MCF 10A (cell line): ENCODE measurements at regions of chr11 and their contacts with region 1.

Region 1: DNA sequence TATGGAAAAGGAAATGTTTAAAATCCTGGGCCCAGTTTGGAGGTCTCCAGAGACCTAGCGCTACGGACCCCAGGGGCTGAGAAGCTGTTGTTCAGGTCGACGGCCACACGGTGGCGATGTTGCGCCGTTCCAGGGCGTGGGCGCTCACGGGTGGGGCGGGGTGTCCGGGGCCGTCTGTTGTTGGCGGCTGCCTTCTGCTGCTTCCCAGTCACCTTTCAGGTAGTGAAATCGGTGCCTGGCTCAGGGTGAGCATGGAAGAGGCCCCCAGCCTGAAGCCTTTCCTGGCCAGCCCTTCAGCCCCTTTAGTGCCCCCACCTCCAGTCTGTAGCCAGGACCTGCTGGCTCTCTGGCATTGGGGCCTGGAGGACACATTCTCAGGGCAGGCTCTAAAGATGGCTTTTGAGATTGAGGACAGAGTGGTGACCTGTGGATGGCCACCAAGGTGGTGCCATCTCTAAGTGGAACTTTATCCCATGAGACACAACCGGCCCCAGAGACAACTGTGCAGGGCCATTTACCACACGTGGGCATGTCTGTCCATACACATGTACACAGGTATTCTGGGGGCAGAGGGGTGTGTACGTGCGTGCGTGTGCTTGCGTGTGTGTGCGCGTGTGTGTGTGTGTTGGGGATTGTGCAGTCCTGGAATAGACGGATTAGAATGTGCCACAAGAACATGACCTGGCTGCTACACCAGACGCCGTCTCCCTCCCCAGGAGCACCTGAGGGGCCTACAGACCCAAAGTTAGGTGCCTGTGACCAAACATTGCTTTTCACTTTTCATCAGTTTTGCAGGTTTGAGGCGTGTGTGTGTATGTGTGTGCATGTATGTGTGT is 53.8 kb downstream of the ST14 start:
- DNase-seq: peak; percentile 55
- H3K4me3 Mint-ChIP-seq: no peak overlapping the region
- H3K27ac Mint-ChIP-seq: no peak overlapping the region
- H3K4me1 Mint-ChIP-seq: no peaks in the 10 kb centered on the region
- H3K27me3 Mint-ChIP-seq: no peaks in the 10 kb centered on the region
- CTCF ChIP-seq: peak; percentile 96

Region 2: GRCh38 chr11:129557421-129557820 is 655.9 kb before region 1 on chr11:
- CTCF ChIA-PET with region 1: no interaction called
- POLR2A ChIA-PET with region 1: no interaction called
- intact Hi-C with region 1: no loop called
- DNase-seq: no peak
- H3K4me3 Mint-ChIP-seq: no peak overlapping the region
- H3K27ac Mint-ChIP-seq: no peak overlapping the region
- H3K4me1 Mint-ChIP-seq: no peaks in the 10 kb centered on the region
- H3K27me3 Mint-ChIP-seq: peaks cover 31% of the 10 kb centered on the region
- CTCF ChIP-seq: no peak

Region 3: DNA sequence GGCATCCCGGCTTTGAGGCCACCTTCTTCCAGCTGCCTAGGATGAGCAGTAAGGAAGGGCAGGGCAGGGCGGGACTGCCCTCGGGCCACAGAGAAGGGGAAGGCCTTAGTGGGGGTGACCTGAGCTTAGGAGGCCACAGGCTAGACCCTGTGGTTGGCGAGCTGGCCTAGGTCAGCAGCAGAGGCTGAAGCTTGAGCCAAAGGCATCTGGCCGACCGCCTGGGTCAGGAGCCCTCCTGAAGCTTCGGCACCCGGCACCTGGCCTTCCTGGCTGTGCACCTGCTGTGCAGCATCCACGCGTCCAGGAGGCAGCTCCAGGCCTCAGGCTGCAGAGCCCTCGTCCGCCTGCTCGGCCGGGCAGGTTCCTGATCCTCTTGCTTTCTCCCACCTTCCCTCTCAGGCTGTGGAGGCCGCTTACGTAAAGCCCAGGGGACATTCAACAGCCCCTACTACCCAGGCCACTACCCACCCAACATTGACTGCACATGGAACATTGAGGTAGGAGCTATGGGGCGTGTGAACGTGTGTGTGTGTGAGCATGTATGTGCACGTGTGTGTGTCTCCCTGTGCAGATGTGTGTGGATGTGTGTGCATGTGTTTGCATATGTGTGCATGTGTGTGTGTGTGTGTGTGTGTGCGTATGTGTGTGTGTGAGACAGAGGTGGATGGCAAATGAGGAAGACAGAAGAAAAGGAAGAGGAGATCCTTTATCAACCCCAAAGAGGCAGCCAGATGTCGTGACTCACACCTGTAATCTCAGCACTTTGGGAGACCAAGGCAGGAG is 18.9 kb before region 1 on chr11:
- CTCF ChIA-PET with region 1: interaction called, 12 read pairs
- POLR2A ChIA-PET with region 1: no interaction called
- intact Hi-C with region 1: no loop called
- DNase-seq: no peak
- H3K4me3 Mint-ChIP-seq: no peak overlapping the region
- H3K27ac Mint-ChIP-seq: no peak overlapping the region
- H3K4me1 Mint-ChIP-seq: no peaks in the 10 kb centered on the region
- H3K27me3 Mint-ChIP-seq: no peaks in the 10 kb centered on the region
- CTCF ChIP-seq: no peak

Region 4: DNA sequence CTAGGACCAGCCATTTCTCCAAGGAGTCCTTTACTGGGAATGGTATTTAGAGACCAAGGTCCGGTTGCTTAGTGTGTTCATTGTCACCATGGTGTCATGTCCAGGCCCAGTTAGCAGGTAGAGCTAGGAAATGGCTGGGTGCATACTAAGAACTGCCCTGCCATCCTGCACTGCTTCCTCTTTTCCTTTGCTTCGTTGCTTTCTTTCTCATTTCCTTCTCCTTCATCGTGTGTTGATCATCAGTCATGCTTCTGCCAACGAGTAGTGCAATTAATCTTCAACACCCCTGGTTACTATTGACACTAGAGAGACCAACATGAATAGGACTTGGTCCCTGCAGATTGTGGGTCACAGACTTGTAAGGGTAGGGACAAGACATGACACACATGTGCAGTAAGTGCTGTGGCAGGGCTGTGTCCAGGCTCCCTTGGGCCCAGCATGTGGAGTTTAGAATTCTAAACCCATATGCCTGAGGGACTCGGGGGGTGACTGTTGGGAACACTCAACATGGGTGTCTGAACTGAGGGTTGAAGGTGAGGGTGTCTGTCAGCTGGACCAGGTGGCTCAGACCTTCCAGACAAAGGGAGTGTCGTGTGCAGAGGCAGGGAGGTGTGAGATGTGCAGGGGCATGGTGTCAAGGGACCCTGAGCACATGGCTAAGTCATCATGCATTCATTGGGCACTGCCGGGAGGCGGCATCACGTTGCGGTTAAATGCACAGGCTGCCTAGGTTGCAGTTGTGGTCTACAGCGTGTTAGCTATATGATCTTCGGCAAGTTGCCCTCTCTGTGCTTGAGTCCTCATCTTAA is 11.1 kb before region 1 on chr11:
- CTCF ChIA-PET with region 1: interaction called, 33 read pairs
- POLR2A ChIA-PET with region 1: no interaction called
- intact Hi-C with region 1: no loop called
- DNase-seq: no peak
- H3K4me3 Mint-ChIP-seq: no peak overlapping the region
- H3K27ac Mint-ChIP-seq: no peak overlapping the region
- H3K4me1 Mint-ChIP-seq: no peaks in the 10 kb centered on the region
- H3K27me3 Mint-ChIP-seq: no peaks in the 10 kb centered on the region
- CTCF ChIP-seq: no peak

Region 5: DNA sequence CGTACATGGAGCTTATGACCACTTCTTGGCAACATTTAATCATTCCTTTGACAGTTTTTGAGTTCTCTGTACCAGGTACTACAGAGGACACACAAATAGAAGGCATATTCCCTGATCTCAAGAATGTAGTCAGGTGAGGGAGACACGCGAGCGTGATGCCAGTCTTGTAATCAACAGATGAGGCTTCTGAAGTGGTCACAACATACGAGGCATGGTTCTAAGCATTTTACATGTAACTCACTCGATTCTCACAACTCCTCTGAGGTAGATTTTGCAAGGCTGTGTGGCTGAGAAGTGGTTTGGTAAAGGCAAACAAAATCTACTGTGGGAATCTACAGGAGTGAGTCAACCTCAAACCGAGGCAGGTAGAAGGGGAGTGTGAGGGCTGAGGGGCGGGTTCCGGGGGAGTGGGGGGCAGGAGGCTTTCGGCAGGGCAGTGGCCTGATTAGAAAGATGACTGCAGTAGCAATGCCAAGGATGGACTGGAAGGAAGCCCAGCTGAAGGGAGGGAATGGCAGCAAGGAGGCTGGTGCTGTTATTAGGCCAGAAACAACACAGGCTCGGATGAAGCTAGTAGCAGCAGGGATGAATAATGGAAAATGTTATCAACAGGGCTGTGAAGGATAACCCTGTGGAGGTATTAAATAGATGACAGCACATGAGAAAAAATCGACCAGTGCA is 10.1 kb after region 1 on chr11:
- CTCF ChIA-PET with region 1: interaction called, 26 read pairs
- POLR2A ChIA-PET with region 1: no interaction called
- intact Hi-C with region 1: no loop called
- DNase-seq: no peak
- H3K4me3 Mint-ChIP-seq: no peak overlapping the region
- H3K27ac Mint-ChIP-seq: no peak overlapping the region
- H3K4me1 Mint-ChIP-seq: no peaks in the 10 kb centered on the region
- H3K27me3 Mint-ChIP-seq: no peaks in the 10 kb centered on the region
- CTCF ChIP-seq: no peak